Caco-2 (cell line): ENCODE measurements at regions of chr17 and their contacts with region 1.

Region 1: GRCh38 chr17:81484195-81484979 is 28.2 kb downstream of the ACTG1 start:
- DNase-seq: peak; percentile 93 to 96
- H3K4me3 ChIP-seq: peak overlapping the region; percentile 65
- H3K4me3 Mint-ChIP-seq: peak overlapping the region; percentile 60
- H3K27ac Mint-ChIP-seq: no peak overlapping the region
- H3K4me1 ChIP-seq: peaks cover 18% of the 10 kb centered on the region
- H3K4me1 Mint-ChIP-seq: no peaks in the 10 kb centered on the region
- H3K27me3 ChIP-seq: no peaks in the 10 kb centered on the region
- H3K27me3 Mint-ChIP-seq: no peaks in the 10 kb centered on the region
- CTCF ChIP-seq: peak; percentile 62 to 99

Region 2: GRCh38 chr17:81150377-81151077 is 333.9 kb before region 1 on chr17:
- CTCF ChIA-PET with region 1: no interaction called
- POLR2A ChIA-PET with region 1: interaction called, 24 read pairs
- intact Hi-C with region 1: no loop called
- DNase-seq: no peak
- H3K4me3 ChIP-seq: no peak overlapping the region
- H3K4me3 Mint-ChIP-seq: no peak overlapping the region
- H3K27ac Mint-ChIP-seq: no peak overlapping the region
- H3K4me1 ChIP-seq: no peaks in the 10 kb centered on the region
- H3K4me1 Mint-ChIP-seq: no peaks in the 10 kb centered on the region
- H3K27me3 ChIP-seq: no peaks in the 10 kb centered on the region
- H3K27me3 Mint-ChIP-seq: no peaks in the 10 kb centered on the region
- CTCF ChIP-seq: no peak

Region 3: DNA sequence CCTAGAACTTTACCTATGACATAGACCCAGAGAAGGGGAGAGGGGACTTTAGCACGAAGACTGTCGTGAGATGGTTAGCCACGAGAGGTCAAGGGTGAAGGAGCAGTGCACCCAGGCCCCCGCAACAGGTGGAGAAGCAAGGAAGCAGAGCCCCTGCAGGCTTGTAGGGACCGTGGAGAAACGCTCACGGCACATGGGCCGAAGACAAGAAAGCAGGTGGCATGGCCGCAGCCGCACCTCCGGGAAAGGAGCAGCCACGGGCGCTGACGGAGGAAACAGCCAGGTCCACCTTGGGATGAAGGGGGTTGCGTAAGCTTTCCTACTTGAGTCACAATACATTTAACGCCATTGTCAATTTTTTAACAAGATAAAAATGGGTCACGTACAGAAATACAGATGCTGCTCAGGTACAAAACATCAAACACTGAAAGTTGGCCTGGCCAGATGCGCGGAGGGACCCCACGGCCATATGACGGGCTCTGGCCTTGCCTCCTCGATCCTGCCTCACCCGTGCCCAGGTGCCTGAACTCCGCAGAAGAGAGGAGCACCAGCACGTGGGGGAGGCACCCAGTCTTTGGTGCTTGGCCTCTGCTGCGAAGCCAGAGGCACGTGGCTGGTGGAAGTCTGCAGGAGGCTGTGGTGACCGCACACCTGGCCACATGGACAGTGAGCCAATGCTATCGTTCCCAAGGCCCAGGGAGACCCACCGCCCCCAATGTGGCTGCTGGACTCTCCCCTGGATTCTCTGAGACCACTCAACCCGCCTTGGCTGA is 210.5 kb before region 1 on chr17:
- CTCF ChIA-PET with region 1: no interaction called
- POLR2A ChIA-PET with region 1: no interaction called
- intact Hi-C with region 1: no loop called
- DNase-seq: no peak
- H3K4me3 ChIP-seq: no peak overlapping the region
- H3K4me3 Mint-ChIP-seq: no peak overlapping the region
- H3K27ac Mint-ChIP-seq: no peak overlapping the region
- H3K4me1 ChIP-seq: no peaks in the 10 kb centered on the region
- H3K4me1 Mint-ChIP-seq: no peaks in the 10 kb centered on the region
- H3K27me3 ChIP-seq: no peaks in the 10 kb centered on the region
- H3K27me3 Mint-ChIP-seq: no peaks in the 10 kb centered on the region
- CTCF ChIP-seq: no peak

Region 4: DNA sequence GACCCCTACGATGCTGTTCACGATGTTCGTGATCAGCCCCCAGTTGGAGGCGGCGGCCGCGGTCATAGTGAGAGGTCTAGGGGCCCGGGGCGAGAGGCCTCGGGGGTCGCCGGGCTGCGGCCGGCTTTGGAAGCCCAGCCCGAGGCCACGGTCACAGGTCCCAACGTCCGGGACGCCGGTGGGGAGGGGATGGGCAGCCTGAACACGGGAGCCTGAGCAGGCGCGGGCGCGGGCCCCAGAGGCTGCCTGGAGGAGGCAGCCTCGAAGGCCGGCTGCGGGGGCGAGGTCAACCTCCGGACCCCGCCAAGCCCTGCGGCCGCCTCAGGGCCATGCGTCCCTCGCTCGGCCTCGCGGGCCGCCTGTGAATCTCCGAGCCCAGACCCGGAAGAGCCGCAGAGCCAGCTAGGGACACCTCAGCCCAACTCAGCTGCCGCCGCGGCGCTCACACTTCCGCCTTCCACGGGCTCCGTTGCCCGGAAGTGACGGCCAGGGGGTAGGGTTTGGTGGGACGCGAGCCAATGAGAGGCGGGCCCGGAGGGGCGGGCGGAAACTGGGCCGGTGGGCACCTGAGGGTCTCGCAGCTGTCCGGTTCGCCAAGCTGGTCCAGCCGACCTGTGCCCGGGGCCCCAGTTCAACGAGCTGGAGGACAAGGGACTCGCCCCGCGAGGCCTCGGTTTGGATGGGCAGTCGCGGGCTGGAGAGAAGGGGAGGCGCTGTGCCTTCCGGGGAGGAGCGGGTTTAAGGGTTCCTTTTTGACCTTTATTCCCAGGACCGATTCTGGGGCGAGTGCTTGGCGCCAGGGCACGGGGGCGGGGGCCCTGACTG is 189.3 kb before region 1 on chr17 and contains the start of gene SLC38A10:
- CTCF ChIA-PET with region 1: interaction called, 10 read pairs
- POLR2A ChIA-PET with region 1: interaction called, 4 read pairs
- intact Hi-C with region 1: no loop called
- DNase-seq: peak; percentile 92 to 94
- H3K4me3 ChIP-seq: peak within 1 kb of the TSS; percentile 96
- H3K4me3 Mint-ChIP-seq: peak within 1 kb of the TSS; percentile 80
- H3K27ac Mint-ChIP-seq: peak within 1 kb of the TSS; percentile 83
- H3K4me1 ChIP-seq: peaks cover 17% of the 10 kb centered on the region
- H3K4me1 Mint-ChIP-seq: peaks cover 12% of the 10 kb centered on the region
- H3K27me3 ChIP-seq: no peaks in the 10 kb centered on the region
- H3K27me3 Mint-ChIP-seq: no peaks in the 10 kb centered on the region
- CTCF ChIP-seq: no peak
- total RNA-seq, gene SLC38A10: 131 and 137 TPM in 2 replicates

Region 5: GRCh38 chr17:81394921-81395599 is 89.3 kb before region 1 on chr17 and contains the start of gene BAHCC1:
- CTCF ChIA-PET with region 1: interaction called, 20 read pairs
- POLR2A ChIA-PET with region 1: interaction called, 10 read pairs
- intact Hi-C with region 1: loop called (anchors 1 kb)
- DNase-seq: peak; percentile 100
- H3K4me3 ChIP-seq: peak within 1 kb of the TSS; percentile 94
- H3K4me3 Mint-ChIP-seq: peak within 1 kb of the TSS; percentile 84
- H3K27ac Mint-ChIP-seq: peak within 1 kb of the TSS; percentile 98
- H3K4me1 ChIP-seq: peaks cover 12% of the 10 kb centered on the region
- H3K4me1 Mint-ChIP-seq: peaks cover 28% of the 10 kb centered on the region
- H3K27me3 ChIP-seq: no peaks in the 10 kb centered on the region
- H3K27me3 Mint-ChIP-seq: no peaks in the 10 kb centered on the region
- CTCF ChIP-seq: no peak
- total RNA-seq, gene BAHCC1: 10.2 and 15.5 TPM in 2 replicates

Region 6: GRCh38 chr17:81453712-81454111 is 30.7 kb before region 1 on chr17:
- CTCF ChIA-PET with region 1: no interaction called
- POLR2A ChIA-PET with region 1: no interaction called
- intact Hi-C with region 1: no loop called
- DNase-seq: no peak
- H3K4me3 ChIP-seq: no peak overlapping the region
- H3K4me3 Mint-ChIP-seq: no peak overlapping the region
- H3K27ac Mint-ChIP-seq: no peak overlapping the region
- H3K4me1 ChIP-seq: peaks cover 10% of the 10 kb centered on the region; the same call in 1 of the 2 replicates
- H3K4me1 Mint-ChIP-seq: no peaks in the 10 kb centered on the region
- H3K27me3 ChIP-seq: no peaks in the 10 kb centered on the region
- H3K27me3 Mint-ChIP-seq: no peaks in the 10 kb centered on the region
- CTCF ChIP-seq: no peak

Region 7: GRCh38 chr17:81512560-81513371 is 28.4 kb after region 1 on chr17 and contains the start of gene ACTG1:
- CTCF ChIA-PET with region 1: interaction called, 4 read pairs
- POLR2A ChIA-PET with region 1: interaction called, 10 read pairs
- intact Hi-C with region 1: no loop called
- DNase-seq: peak; percentile 93 to 96
- H3K4me3 ChIP-seq: peak within 1 kb of the TSS; percentile 72
- H3K4me3 Mint-ChIP-seq: peak within 1 kb of the TSS; percentile 92
- H3K27ac Mint-ChIP-seq: peak within 1 kb of the TSS; percentile 96
- H3K4me1 ChIP-seq: peaks cover 34% of the 10 kb centered on the region
- H3K4me1 Mint-ChIP-seq: peaks cover 32% of the 10 kb centered on the region
- H3K27me3 ChIP-seq: no peaks in the 10 kb centered on the region
- H3K27me3 Mint-ChIP-seq: no peaks in the 10 kb centered on the region
- CTCF ChIP-seq: no peak
- total RNA-seq, gene ACTG1: 1,436 and 1,933 TPM in 2 replicates